ENCODE measurements at regions of chr17 and their contacts with region 1.

Region 1: DNA sequence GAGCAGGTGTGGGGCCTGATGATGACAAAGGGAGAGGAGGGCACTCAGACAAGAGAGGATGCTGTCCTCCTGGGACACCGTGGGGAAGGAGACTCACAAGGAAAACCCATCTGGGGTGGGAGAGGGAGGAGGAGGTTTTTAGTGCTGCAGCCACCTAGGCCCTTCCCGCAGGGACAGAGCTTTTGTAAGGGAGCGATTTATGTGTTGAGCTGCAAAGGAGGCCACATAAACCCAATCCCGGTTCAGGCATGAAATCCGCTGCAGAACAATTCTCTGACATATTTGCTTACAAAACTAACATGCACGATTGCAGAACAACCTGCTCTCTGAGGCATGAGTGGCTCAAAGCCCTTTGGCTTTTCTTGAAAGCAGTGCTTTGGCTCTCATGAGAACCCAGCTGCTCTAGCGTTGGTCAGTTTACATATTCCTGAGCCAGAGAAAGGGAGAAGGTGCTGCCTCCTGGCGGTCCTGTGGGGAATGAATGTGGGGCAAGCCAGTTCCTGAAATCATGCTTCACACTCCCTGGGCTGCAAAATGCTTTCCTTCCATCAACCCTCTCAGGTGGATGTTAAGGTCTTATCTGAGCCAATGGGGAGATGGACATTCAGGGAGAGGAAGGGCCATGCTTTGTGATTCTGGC is 122.4 kb upstream of the NLRP1 start:
- DNase-seq: peak; percentile 21
- H3K4me3 Mint-ChIP-seq: no peak overlapping the region
- H3K27ac Mint-ChIP-seq: no peak overlapping the region
- H3K4me1 Mint-ChIP-seq: no peaks in the 10 kb centered on the region
- H3K27me3 Mint-ChIP-seq: peaks cover 5% of the 10 kb centered on the region

Region 2: DNA sequence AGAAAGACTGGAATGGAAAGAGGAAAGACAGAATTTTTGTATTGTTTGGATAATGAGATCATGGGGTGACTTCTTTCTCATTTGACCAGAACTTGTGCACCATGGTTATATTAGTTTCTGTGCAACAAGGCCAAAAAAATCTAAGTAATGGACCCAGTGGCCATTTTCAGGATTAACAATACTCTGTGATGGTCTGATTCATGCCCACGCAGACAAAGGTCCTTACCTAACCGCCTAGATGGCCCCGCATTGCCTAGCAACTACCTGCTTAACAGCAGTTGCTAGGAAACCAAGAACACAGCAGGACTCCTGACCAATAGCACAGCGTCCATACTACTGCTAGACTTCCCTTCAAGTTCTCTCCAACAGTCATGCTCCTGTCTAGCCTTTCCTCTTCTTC is 197.9 kb before region 1 on chr17:
- intact Hi-C with region 1: no loop called
- DNase-seq: no peak
- H3K4me3 Mint-ChIP-seq: no peak overlapping the region
- H3K27ac Mint-ChIP-seq: no peak overlapping the region
- H3K4me1 Mint-ChIP-seq: peaks cover 20% of the 10 kb centered on the region
- H3K27me3 Mint-ChIP-seq: no peaks in the 10 kb centered on the region

Region 3: GRCh38 chr17:5769593-5770354 is 63.1 kb after region 1 on chr17:
- intact Hi-C with region 1: no loop called
- DNase-seq: no peak
- H3K4me3 Mint-ChIP-seq: no peak overlapping the region
- H3K27ac Mint-ChIP-seq: no peak overlapping the region
- H3K4me1 Mint-ChIP-seq: no peaks in the 10 kb centered on the region
- H3K27me3 Mint-ChIP-seq: peaks cover 6% of the 10 kb centered on the region

Region 4: GRCh38 chr17:6421700-6422604 is 715.3 kb after region 1 on chr17:
- intact Hi-C with region 1: loop called (anchors 5 kb)
- DNase-seq: peak; percentile 48
- H3K4me3 Mint-ChIP-seq: no peak overlapping the region
- H3K27ac Mint-ChIP-seq: peak overlapping the region; percentile 34
- H3K4me1 Mint-ChIP-seq: peaks cover 2% of the 10 kb centered on the region
- H3K27me3 Mint-ChIP-seq: peaks cover 50% of the 10 kb centered on the region

Region 5: GRCh38 chr17:6435968-6436367 is 729.3 kb after region 1 on chr17:
- intact Hi-C with region 1: loop called (anchors 5 kb)
- DNase-seq: peak; percentile 44
- H3K4me3 Mint-ChIP-seq: no peak overlapping the region
- H3K27ac Mint-ChIP-seq: no peak overlapping the region
- H3K4me1 Mint-ChIP-seq: no peaks in the 10 kb centered on the region
- H3K27me3 Mint-ChIP-seq: peaks cover 59% of the 10 kb centered on the region